ENCODE measurements at regions of chr14 and their contacts with region 1.

Region 1: GRCh38 chr14:76647697-76648298 is 113.5 kb upstream of the VASH1 start:
- DNase-seq: no peak
- H3K4me3 ChIP-seq: no peak overlapping the region
- H3K27ac ChIP-seq: no peak overlapping the region
- H3K4me1 ChIP-seq: no peaks in the 10 kb centered on the region
- H3K27me3 ChIP-seq: peaks cover 0 to 30% (median 0%) of the 10 kb centered on the region in 4 donors
- CTCF ChIP-seq: peak; percentile 19 to 77 (median 57)
- POLR2A ChIP-seq: no peak

Region 2: DNA sequence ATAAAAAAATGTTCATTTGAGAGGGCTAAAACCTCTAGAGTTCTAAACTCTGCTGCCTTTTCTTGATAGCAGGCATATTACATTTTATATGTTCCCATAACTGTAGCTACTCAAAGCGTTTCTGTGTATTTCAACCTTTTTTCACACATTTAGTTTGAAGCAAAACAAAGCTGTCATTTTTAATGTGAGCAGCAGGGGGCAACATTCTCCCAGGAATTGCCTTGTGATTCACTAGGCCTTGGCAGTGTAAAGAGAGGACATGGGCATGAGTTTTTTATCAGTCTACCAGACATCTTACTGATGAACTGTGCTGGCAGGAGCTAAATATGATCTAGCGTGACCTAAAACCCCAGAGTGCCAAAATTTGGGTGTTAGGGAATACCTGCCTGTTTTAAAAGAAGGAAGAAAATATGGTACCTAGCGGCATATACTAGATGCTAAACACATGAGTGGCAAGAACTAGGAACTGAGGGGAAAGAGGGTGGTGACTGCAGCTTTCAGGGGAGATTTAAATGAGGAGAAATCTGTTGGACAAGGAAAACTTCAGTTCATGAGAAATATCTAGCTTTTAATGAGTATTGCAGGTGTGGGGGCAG is 596.9 kb before region 1 on chr14:
- intact Hi-C with region 1: loop called (anchors 5 kb)
- DNase-seq: no peak
- H3K4me3 ChIP-seq: no peak overlapping the region
- H3K27ac ChIP-seq: no peak overlapping the region
- H3K4me1 ChIP-seq: no peaks in the 10 kb centered on the region
- H3K27me3 ChIP-seq: no peaks in the 10 kb centered on the region
- CTCF ChIP-seq: peak; percentile 55 to 83 (median 76)
- POLR2A ChIP-seq: no peak

Region 3: GRCh38 chr14:76456200-76456599 is 191.6 kb before region 1 on chr14:
- intact Hi-C with region 1: loop called (anchors 10 kb)
- DNase-seq: no peak
- H3K4me3 ChIP-seq: no peak overlapping the region
- H3K27ac ChIP-seq: no peak overlapping the region
- H3K4me1 ChIP-seq: no peaks in the 10 kb centered on the region
- H3K27me3 ChIP-seq: no peaks in the 10 kb centered on the region
- CTCF ChIP-seq: peak in 2 of 6 experiments; percentile 31 to 47
- POLR2A ChIP-seq: no peak

Region 4: DNA sequence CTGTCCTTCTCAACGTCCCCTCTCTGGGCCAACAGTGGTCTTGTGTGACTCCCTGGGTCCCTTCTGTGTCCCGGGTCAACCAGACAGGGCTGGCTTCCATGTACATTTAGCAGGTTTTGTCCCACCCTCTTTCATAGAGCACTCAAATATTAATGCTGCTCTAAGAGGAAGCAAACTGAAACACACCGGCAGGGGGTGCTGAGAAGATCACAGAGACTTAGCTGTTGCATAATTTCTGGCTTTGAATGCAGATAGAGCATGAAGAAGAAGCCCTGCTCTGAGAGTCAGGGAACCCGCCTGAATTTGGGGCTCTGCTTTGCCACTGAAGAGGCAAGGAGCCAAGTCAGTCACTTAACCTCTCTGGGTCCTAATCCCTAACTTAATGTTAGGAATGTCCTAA is 133.2 kb before region 1 on chr14:
- intact Hi-C with region 1: loop called (anchors 10 kb)
- DNase-seq: no peak
- H3K4me3 ChIP-seq: no peak overlapping the region
- H3K27ac ChIP-seq: no peak overlapping the region
- H3K4me1 ChIP-seq: peaks cover 0 to 40% (median 0%) of the 10 kb centered on the region in 3 donors
- H3K27me3 ChIP-seq: peaks cover 0 to 73% (median 0%) of the 10 kb centered on the region in 4 donors
- CTCF ChIP-seq: peak in 5 of 6 experiments; percentile 10 to 67 (median 42)
- POLR2A ChIP-seq: no peak

Measured in esophagus squamous epithelium (tissue), 5 donors.